GM23248 (cell line): ENCODE measurements at regions of chr9 and their contacts with region 1.

Region 1: GRCh38 chr9:132006677-132007370 is 72.8 kb downstream of the MED27 start:
- DNase-seq: no peak
- H3K4me3 ChIP-seq: no peak overlapping the region
- H3K27ac ChIP-seq: no peak overlapping the region
- H3K4me1 ChIP-seq: peaks cover 19% of the 10 kb centered on the region
- H3K27me3 ChIP-seq: no peaks in the 10 kb centered on the region

Region 2: DNA sequence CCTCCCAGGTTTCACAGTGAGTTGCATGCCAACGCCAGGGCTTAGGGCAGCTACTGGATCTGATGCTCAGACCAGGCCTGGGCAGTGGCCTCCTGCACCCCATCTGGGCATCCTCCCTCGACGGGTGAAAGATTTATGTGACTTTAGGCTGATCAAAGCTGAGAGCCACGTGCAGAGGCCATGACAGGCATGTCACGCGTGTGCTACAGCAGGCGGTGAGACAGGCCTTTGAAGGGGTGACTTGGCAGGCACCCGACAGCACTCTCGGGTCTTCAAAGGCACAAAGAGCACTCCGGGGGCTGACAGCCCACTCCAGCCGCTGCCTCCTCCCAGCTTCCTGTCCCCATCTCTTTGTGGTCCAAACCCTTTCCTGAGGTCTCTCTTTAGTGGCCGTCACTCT is 221.2 kb after region 1 on chr9:
- in situ Hi-C with region 1: loop called (anchors 10 kb)
- DNase-seq: no peak
- H3K4me3 ChIP-seq: no peak overlapping the region
- H3K27ac ChIP-seq: no peak overlapping the region
- H3K4me1 ChIP-seq: no peaks in the 10 kb centered on the region
- H3K27me3 ChIP-seq: peaks cover 27% of the 10 kb centered on the region